ENCODE measurements at regions of chr5 and their contacts with region 1.

Region 1: GRCh38 chr5:3047212-3047774 is 295.8 kb upstream of the IRX2 start:
- DNase-seq: no peak

Region 2: DNA sequence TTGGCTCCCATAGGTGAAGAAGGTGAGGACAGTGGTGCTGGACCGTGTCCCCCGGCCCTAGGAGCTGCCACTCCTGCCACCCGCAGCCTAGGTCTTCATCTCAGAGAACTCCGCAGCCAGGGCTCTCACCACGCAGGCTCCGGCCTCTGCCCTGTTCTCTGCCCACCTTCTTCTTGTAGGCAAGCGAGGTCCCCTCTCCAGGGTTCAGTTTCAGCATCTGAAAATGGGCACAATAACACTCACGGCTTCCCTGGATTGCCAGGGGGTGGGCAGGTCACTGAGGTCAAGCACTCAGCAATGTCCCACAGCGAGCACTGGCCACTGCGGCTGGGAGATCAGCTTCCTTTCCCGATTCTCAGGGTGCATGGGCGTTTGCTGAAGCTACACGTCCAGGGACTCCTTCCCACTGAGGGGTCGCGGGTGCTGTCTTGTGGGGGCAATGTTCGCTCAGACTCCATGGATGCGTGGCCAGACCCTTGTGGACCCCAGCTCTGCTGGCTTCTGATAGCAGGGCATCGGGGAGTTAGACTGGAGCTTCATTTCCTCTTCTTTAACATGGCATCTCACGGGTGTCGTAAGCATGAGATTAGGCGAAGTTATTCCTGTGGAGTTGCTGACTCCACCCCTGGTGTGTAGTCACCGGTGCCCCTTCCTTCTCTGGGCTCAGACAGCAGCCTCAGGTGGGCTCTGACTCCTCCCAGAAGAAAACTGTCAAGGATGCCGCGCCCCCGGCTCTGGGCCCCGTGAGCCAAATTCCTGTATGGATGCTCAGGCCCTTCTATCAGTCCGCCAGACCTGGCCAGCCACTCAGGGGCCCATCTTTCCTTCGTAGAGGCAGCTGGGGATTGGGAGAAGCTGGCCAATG is 150.7 kb before region 1 on chr5:
- intact Hi-C with region 1: no loop called
- DNase-seq: peak; percentile 66

Region 3: GRCh38 chr5:3010301-3010952 is 36.9 kb before region 1 on chr5:
- intact Hi-C with region 1: loop called in 1 of 2 experiments (anchors 1 kb)
- DNase-seq: no peak

Region 4: DNA sequence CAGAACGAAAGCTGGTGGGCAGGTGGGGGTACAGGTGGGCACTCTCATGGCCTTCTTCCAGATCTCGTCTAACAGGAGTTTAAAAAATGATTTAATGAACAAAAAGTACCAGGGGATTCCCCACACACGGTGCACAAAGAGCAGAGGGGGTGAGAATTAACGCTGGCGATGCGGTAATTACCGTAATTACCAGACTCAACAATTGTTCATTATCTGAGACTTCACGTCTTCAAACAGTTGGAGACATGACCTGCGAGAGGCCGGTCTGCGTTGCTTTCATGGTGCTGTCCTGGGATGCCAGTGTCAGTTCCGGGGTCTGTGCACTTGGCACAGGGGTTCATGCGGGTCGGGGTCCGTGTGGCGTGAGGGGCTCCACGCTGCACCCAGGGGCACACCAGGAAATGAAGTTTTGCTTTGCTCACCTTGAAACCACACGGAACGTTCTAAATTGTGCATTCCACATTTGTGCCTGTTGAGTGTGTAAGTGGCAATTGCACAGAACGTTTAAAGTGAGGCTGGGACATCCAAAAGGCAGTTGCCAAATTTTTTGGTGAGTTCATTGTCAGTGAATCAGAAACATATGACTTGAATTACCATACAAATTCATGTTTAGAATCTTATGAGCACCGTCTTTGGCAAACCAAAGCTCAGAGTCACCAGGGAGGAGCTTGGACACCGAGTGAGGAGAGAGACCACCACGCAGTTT is 292.0 kb after region 1 on chr5:
- intact Hi-C with region 1: loop called in 1 of 2 experiments (anchors 5 kb)
- DNase-seq: no peak

Region 5: GRCh38 chr5:3789519-3790193 is 742.4 kb after region 1 on chr5:
- intact Hi-C with region 1: no loop called
- DNase-seq: no peak

Measured in posterior vena cava (tissue), 2 donors.